CD14-positive monocyte (primary cell): ENCODE measurements at regions of chr1 and their contacts with region 1.

Region 1: DNA sequence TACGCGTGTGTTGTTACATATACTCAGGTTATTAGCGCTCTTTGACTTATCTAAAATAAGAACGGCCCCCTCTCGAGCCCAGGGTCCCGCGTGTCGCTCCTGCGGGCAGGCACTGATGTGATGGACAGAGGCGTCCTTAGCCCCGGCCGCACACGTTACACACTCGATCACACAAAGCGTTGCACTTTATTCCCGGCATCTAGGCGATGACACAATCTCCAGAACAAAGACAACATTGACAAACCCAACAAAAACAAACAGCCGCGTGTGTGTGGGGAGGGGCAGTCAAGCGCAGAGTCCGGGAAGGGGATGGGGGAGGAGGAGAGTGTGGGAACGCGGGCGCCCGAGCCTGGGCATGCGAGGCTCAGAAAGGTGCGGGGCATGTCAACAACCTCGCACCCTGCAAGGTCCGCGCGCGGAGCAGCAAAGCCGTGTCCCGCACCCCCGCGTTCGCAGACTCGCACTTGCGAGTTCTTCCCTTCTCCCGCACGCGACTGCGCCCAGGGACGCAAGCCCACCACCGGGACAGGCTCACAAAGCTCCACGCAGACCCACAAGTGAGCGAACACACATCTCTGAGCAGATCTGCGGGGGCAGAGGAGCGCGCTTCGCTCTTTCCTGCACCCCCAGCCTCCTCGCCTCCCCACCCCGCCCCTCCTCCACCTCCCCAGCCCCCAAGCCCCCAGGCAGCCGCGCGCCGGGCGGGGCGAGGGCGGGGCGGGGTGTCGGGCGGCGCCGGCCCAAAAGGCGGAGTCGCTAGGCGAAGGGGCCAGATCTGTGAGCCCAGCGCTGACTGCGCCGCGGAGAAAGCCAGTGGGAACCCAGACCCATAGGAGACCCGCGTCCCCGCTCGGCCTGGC is at the start of gene EFNA1:
- DNase-seq: peak in 2 of 3 donors; percentile 20 to 23
- H3K4me3 ChIP-seq: peak within 1 kb of the TSS; percentile 4 to 70 (median 30)
- H3K4me3 Mint-ChIP-seq: peak within 1 kb of the TSS; percentile 76 to 89
- H3K27ac ChIP-seq: no peak within 1 kb of the TSS
- H3K27ac Mint-ChIP-seq: peak within 1 kb of the TSS in 5 of 7 donors; percentile 15 to 76 (median 53)
- H3K4me1 ChIP-seq: peaks cover 25 to 33% of the 10 kb centered on the region in 2 donors
- H3K4me1 Mint-ChIP-seq: peaks cover 34% of the 10 kb centered on the region
- H3K27me3 ChIP-seq: peaks cover 45 to 69% of the 10 kb centered on the region in 2 donors
- H3K27me3 Mint-ChIP-seq: peaks cover 62 to 90% (median 78%) of the 10 kb centered on the region in 3 donors
- CTCF ChIP-seq: no peak
- polyA plus RNA-seq, gene EFNA1: 1.2 TPM in 1 of 3 donors, not detected in the others

Region 2: GRCh38 chr1:155079487-155080311 is 47.6 kb before region 1 on chr1:
- intact Hi-C with region 1: no loop called
- DNase-seq: no peak
- H3K4me3 ChIP-seq: peak overlapping the region in 1 of 3 experiments; percentile 67
- H3K4me3 Mint-ChIP-seq: peak overlapping the region; percentile 65 to 91
- H3K27ac ChIP-seq: no peak overlapping the region
- H3K27ac Mint-ChIP-seq: peak overlapping the region in 1 of 7 donors; percentile 41
- H3K4me1 ChIP-seq: peaks cover 49 to 58% of the 10 kb centered on the region in 2 donors
- H3K4me1 Mint-ChIP-seq: peaks cover 43% of the 10 kb centered on the region
- H3K27me3 ChIP-seq: peaks cover 57 to 76% of the 10 kb centered on the region in 2 donors
- H3K27me3 Mint-ChIP-seq: peaks cover 61 to 80% (median 75%) of the 10 kb centered on the region in 3 donors
- CTCF ChIP-seq: no peak

Region 3: GRCh38 chr1:155091071-155091709 is 36.1 kb before region 1 on chr1:
- intact Hi-C with region 1: loop called (anchors 5 kb)
- DNase-seq: peak; percentile 71 to 79 (median 75)
- H3K4me3 ChIP-seq: no peak overlapping the region
- H3K4me3 Mint-ChIP-seq: peak overlapping the region in 1 of 2 donors; percentile 48
- H3K27ac ChIP-seq: no peak overlapping the region
- H3K27ac Mint-ChIP-seq: no peak overlapping the region
- H3K4me1 ChIP-seq: peaks cover 3 to 12% of the 10 kb centered on the region in 2 donors
- H3K4me1 Mint-ChIP-seq: peaks cover 8% of the 10 kb centered on the region
- H3K27me3 ChIP-seq: peaks cover 0 to 6% of the 10 kb centered on the region in 2 donors
- H3K27me3 Mint-ChIP-seq: peaks cover 5 to 15% (median 9%) of the 10 kb centered on the region in 3 donors
- CTCF ChIP-seq: peak; percentile 97

Region 4: GRCh38 chr1:155105604-155106022 is 21.7 kb before region 1 on chr1:
- intact Hi-C with region 1: no loop called
- DNase-seq: no peak
- H3K4me3 ChIP-seq: no peak overlapping the region
- H3K4me3 Mint-ChIP-seq: no peak overlapping the region
- H3K27ac ChIP-seq: no peak overlapping the region
- H3K27ac Mint-ChIP-seq: peak overlapping the region in 1 of 7 donors; percentile 43
- H3K4me1 ChIP-seq: peaks cover 26% of the 10 kb centered on the region in 2 donors
- H3K4me1 Mint-ChIP-seq: peaks cover 37% of the 10 kb centered on the region
- H3K27me3 ChIP-seq: no peaks in the 10 kb centered on the region
- H3K27me3 Mint-ChIP-seq: peaks cover 0 to 5% (median 2%) of the 10 kb centered on the region in 3 donors
- CTCF ChIP-seq: no peak

Region 5: GRCh38 chr1:155160128-155160527 is 32.8 kb after region 1 on chr1:
- intact Hi-C with region 1: loop called (anchors 5 kb)
- DNase-seq: no peak
- H3K4me3 ChIP-seq: no peak overlapping the region
- H3K4me3 Mint-ChIP-seq: no peak overlapping the region
- H3K27ac ChIP-seq: no peak overlapping the region
- H3K27ac Mint-ChIP-seq: no peak overlapping the region
- H3K4me1 ChIP-seq: no peaks in the 10 kb centered on the region
- H3K4me1 Mint-ChIP-seq: peaks cover 3% of the 10 kb centered on the region
- H3K27me3 ChIP-seq: no peaks in the 10 kb centered on the region
- H3K27me3 Mint-ChIP-seq: no peaks in the 10 kb centered on the region
- CTCF ChIP-seq: no peak

Region 6: DNA sequence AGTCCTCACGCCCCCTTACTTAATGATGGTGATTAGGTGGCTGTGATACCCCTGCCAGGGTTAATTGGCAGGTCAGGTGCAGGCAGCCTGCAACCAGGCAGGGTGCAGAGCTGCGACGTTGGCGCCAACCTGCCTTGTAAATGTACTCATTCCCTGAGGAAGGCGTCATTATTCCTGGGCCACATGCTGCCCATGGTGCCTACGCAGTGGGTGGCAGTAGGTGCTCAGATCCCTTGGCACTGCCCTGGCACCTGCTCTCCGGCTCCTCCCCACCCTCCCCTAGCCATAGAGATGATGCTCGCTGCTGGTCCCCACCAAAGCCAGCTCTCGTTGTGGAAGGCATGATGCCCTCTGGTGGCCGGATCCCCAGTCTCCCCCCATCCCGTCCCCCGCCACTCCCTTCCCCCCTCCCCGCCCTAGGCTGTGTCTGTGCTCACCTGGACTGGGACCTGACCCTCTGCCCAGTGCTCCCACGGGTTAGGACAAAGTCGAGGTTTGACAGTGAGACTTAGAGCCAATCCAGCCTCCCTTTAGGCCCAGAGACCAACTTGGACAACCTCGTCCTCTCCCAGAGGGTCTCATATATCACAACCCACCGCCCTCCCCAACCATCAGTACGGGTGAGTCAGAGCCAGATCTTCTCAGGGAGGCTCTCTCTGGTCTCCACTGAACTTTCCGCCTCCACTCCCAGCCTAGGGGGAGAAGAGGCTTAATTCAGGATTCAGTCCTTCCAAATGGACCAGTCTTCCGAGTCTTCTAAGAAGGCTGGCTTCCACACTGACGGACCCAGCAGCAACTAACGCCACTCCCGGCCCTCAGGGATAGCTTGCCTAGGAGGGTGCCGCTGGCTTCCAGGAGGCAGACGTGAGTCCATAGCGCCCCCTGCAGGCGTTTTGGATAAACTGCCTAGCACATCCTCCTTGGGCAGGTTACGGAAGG is 40.1 kb after region 1 on chr1:
- intact Hi-C with region 1: loop called (anchors 5 kb)
- DNase-seq: peak; percentile 80 to 85 (median 84)
- H3K4me3 ChIP-seq: no peak overlapping the region
- H3K4me3 Mint-ChIP-seq: peak overlapping the region in 1 of 2 donors; percentile 62
- H3K27ac ChIP-seq: no peak overlapping the region
- H3K27ac Mint-ChIP-seq: peak overlapping the region in 2 of 7 donors; percentile 40 to 80
- H3K4me1 ChIP-seq: peaks cover 22% of the 10 kb centered on the region in 2 donors
- H3K4me1 Mint-ChIP-seq: peaks cover 24% of the 10 kb centered on the region
- H3K27me3 ChIP-seq: peaks cover 0 to 15% of the 10 kb centered on the region in 2 donors
- H3K27me3 Mint-ChIP-seq: peaks cover 16 to 23% (median 22%) of the 10 kb centered on the region in 3 donors
- CTCF ChIP-seq: peak; percentile 88

Region 7: DNA sequence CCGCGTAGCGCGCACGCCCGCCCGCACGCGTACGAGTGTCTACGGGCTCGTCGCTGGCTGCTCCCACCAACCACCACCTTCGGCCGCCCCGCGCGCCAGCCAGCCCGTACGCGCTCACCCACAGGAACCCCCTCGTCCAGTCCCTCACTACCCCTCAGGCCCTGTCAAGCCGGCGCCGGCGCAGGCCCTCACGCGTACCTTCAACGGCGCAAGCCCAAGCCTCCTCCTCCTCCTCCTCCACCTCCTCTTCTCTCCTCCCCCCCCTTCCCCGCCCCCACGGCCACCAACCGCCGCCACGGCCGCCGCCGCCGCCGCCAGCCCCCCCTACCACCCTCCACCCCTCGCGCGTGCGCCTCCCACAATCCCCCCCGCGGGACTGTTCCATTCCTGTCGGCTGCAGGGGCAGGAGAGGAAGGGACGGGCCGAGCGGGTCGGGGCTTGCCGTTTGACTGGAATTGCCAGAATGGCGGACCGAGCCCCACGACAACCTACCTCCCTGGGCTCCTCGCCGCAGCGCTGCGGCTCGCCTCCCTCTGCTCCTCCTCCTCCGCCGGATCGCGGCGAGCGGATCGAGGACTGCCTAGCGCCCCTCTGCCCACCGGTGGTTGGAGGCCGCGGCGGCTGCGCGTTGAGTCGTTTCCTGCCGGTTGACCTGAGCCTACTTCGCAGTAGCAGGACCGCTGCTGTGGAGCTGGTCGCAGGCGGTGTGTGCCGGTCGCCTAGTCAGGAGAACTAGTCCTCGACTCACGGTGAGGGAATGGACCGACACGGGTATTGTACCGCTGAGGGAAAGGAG is 435.4 kb after region 1 on chr1 and contains the start of gene ASH1L:
- intact Hi-C with region 1: no loop called
- DNase-seq: peak; percentile 87 to 89 (median 88)
- H3K4me3 ChIP-seq: peak within 1 kb of the TSS; percentile 73 to 95 (median 93)
- H3K4me3 Mint-ChIP-seq: peak within 1 kb of the TSS; percentile 98
- H3K27ac ChIP-seq: peak within 1 kb of the TSS; percentile 96 to 98
- H3K27ac Mint-ChIP-seq: peak within 1 kb of the TSS; percentile 96 to 98 (median 97)
- H3K4me1 ChIP-seq: peaks cover 31 to 49% of the 10 kb centered on the region in 2 donors
- H3K4me1 Mint-ChIP-seq: peaks cover 46% of the 10 kb centered on the region
- H3K27me3 ChIP-seq: no peaks in the 10 kb centered on the region
- H3K27me3 Mint-ChIP-seq: no peaks in the 10 kb centered on the region
- CTCF ChIP-seq: no peak
- polyA plus RNA-seq, gene ASH1L: 2.7 to 21.5 (median 5.6) TPM